ENCODE measurements at regions of chr1 and their contacts with region 1.

Region 1: GRCh38 chr1:18902523-18903290 is at the start of gene ALDH4A1:
- DNase-seq: peak; percentile 97
- ATAC-seq: peak; percentile 99
- H3K4me3 Mint-ChIP-seq: peak within 1 kb of the TSS; percentile 91
- H3K27ac Mint-ChIP-seq: peak within 1 kb of the TSS; percentile 98
- H3K4me1 Mint-ChIP-seq: peaks cover 36% of the 10 kb centered on the region
- H3K27me3 Mint-ChIP-seq: peaks cover 2% of the 10 kb centered on the region
- total RNA-seq, gene ALDH4A1: 4.2 to 4.3 TPM

Region 2: GRCh38 chr1:18751425-18751824 is 151.3 kb before region 1 on chr1:
- CTCF ChIA-PET with region 1: no interaction called
- POLR2A ChIA-PET with region 1: no interaction called
- DNase-seq: no peak
- ATAC-seq: no peak
- H3K4me3 Mint-ChIP-seq: no peak overlapping the region
- H3K27ac Mint-ChIP-seq: no peak overlapping the region
- H3K4me1 Mint-ChIP-seq: no peaks in the 10 kb centered on the region
- H3K27me3 Mint-ChIP-seq: peaks cover 16% of the 10 kb centered on the region

Region 3: DNA sequence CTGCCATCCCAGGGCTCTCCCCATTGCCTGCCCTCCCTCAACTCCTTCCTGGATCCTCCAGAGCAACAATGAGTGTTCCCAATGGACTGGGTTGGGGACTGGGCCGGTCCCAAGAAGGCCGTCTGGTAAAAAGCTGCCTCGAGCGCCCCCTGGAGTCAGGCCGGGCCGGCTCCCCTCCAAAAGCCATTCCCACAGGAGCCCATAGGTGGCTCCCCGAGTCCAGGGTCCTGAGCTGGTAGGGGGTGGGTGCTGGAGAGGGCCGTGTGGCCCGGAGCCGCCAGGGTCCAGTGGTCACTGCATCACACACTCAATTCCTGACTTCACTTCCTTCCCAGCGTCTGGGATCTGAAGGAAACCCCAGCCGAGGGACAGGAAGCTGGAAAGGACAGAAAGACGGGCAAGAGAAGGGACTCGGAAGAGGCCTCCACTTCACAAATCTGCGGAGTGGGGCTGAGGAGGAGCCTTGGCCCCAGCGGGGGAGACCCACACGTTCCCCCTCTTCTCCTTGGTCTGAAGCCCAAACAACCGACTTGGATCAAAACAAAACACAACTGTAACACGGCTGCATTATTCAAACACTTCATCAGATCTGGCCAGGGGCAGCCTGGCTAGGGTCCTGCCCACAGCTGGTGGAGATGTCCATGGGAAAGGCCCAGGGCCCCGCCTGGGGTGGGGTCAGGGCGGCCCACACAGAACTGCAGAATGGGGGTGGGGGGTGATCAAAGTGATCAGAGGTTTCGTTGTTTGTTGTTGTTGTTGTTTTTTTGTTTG is 10.5 kb after region 1 on chr1:
- CTCF ChIA-PET with region 1: interaction called, 51 read pairs
- POLR2A ChIA-PET with region 1: no interaction called
- DNase-seq: peak; percentile 74
- ATAC-seq: peak; percentile 93
- H3K4me3 Mint-ChIP-seq: no peak overlapping the region
- H3K27ac Mint-ChIP-seq: no peak overlapping the region
- H3K4me1 Mint-ChIP-seq: peaks cover 4% of the 10 kb centered on the region
- H3K27me3 Mint-ChIP-seq: no peaks in the 10 kb centered on the region

Region 4: DNA sequence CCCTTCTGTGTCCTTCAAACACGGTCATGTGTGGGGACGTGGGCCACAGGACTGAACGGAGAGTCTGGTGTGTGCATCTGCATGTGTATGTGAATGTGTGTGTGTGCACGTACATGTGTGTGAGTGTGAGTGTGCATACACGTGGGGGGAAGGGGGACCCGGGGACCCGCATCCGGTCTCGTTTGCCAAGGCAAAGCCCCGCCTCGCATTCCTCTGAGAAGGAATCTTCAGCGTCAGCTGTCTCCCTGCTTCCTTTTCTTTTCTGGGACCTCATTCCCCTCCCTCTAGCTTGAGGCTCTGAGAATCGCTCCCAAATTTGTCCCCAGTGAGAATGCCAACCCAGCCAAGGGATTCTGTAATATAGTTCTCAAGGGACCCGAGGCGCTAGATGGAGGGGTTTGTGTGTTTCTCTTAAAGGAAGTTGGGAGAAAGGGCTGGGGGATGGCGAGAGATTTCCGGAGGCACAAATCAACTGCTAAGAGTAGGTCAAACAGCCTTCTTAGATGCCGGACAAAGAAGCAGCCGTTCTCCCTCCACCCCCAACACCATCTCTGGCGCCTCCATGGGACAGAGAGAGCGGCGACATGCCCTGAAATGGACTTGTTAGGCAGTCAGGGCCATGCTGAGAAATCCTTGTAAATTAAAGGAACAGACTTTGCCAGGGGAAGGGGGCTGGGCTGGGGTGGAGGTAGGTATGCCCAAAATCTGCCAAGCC is 47.1 kb after region 1 on chr1:
- CTCF ChIA-PET with region 1: interaction called, 54 read pairs
- POLR2A ChIA-PET with region 1: no interaction called
- DNase-seq: peak; percentile 41
- ATAC-seq: no peak
- H3K4me3 Mint-ChIP-seq: peak overlapping the region; percentile 71
- H3K27ac Mint-ChIP-seq: peak overlapping the region; percentile 94
- H3K4me1 Mint-ChIP-seq: peaks cover 86% of the 10 kb centered on the region
- H3K27me3 Mint-ChIP-seq: peaks cover 17% of the 10 kb centered on the region

Region 5: GRCh38 chr1:18965206-18966173 is 62.8 kb after region 1 on chr1:
- CTCF ChIA-PET with region 1: interaction called, 10 read pairs
- POLR2A ChIA-PET with region 1: no interaction called
- DNase-seq: no peak
- ATAC-seq: no peak
- H3K4me3 Mint-ChIP-seq: no peak overlapping the region
- H3K27ac Mint-ChIP-seq: no peak overlapping the region
- H3K4me1 Mint-ChIP-seq: no peaks in the 10 kb centered on the region
- H3K27me3 Mint-ChIP-seq: peaks cover 24% of the 10 kb centered on the region

Region 6: DNA sequence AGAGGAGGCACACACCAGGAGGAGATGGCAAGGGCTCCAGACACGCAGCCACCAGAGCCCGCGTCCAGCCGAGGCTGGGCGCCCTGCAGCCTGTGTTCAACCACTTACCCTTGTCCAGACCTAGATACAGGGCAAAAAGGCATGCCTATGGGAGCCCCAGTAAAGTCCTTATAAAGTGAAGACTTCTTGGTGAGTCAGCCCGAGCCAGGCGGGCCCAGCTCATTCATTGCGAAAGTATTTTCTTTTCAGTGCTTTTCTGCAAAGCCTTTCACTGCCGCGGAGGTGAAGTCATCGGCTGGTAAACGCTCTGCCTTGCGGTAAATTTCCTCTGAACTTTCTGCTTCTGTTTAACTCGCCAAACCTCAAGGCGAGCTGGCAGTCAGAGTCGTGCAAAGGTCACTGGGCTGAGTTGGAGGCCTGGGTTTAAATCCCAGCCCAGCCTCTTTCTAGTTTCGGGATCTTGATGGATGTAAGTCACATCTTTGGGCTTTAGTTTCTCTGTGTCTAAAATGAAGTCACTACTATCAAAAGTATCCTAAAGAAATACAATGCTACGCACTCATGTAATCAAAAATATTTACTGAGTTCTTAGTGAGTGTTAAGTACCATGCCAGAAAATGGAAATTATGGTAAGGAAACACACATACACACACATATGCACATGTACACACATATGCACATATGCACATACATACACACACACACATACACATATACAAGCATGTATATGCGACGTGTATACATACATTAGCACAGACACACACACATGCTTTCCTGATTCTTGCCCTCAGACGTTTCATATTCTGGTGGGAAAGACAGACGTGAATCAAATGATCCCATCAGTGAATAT is 108.5 kb after region 1 on chr1:
- CTCF ChIA-PET with region 1: interaction called, 11 read pairs
- POLR2A ChIA-PET with region 1: no interaction called
- DNase-seq: peak; percentile 87
- ATAC-seq: peak; percentile 98
- H3K4me3 Mint-ChIP-seq: no peak overlapping the region
- H3K27ac Mint-ChIP-seq: peak overlapping the region; percentile 44
- H3K4me1 Mint-ChIP-seq: peaks cover 28% of the 10 kb centered on the region
- H3K27me3 Mint-ChIP-seq: peaks cover 4% of the 10 kb centered on the region

Region 7: GRCh38 chr1:19096036-19096833 is 193.5 kb after region 1 on chr1:
- CTCF ChIA-PET with region 1: interaction called, 15 read pairs
- POLR2A ChIA-PET with region 1: no interaction called
- DNase-seq: peak; percentile 32
- ATAC-seq: no peak
- H3K4me3 Mint-ChIP-seq: no peak overlapping the region
- H3K27ac Mint-ChIP-seq: no peak overlapping the region
- H3K4me1 Mint-ChIP-seq: no peaks in the 10 kb centered on the region
- H3K27me3 Mint-ChIP-seq: no peaks in the 10 kb centered on the region